Transverse colon (tissue), 4 donors: ENCODE measurements at regions of chr5 and their contacts with region 1.

Region 1: GRCh38 chr5:140157032-140157803 is 17.8 kb upstream of the CYSTM1 start:
- DNase-seq: peak; percentile 92
- H3K4me3 ChIP-seq: peak overlapping the region in 3 of 4 donors; percentile 19 to 33 (median 28)
- H3K27ac ChIP-seq: peak overlapping the region in 3 of 4 donors; percentile 11 to 17 (median 15)
- H3K4me1 ChIP-seq: peaks cover 3 to 15% (median 9%) of the 10 kb centered on the region in 4 donors
- H3K27me3 ChIP-seq: no peaks in the 10 kb centered on the region
- CTCF ChIP-seq: peak; percentile 87 to 93 (median 90)
- EP300 ChIP-seq: no peak
- POLR2A ChIP-seq: no peak

Region 2: GRCh38 chr5:140073296-140073695 is 83.9 kb before region 1 on chr5:
- in situ Hi-C with region 1: loop called (anchors 5 to 10 kb)
- intact Hi-C with region 1: loop called (anchors 1 kb)
- DNase-seq: no peak
- H3K4me3 ChIP-seq: no peak overlapping the region
- H3K27ac ChIP-seq: no peak overlapping the region
- H3K4me1 ChIP-seq: peaks cover 0 to 4% (median 0%) of the 10 kb centered on the region in 4 donors
- H3K27me3 ChIP-seq: peaks cover 23% of the 10 kb centered on the region
- CTCF ChIP-seq: peak; percentile 67 to 80 (median 72)
- EP300 ChIP-seq: no peak
- POLR2A ChIP-seq: no peak

Region 3: DNA sequence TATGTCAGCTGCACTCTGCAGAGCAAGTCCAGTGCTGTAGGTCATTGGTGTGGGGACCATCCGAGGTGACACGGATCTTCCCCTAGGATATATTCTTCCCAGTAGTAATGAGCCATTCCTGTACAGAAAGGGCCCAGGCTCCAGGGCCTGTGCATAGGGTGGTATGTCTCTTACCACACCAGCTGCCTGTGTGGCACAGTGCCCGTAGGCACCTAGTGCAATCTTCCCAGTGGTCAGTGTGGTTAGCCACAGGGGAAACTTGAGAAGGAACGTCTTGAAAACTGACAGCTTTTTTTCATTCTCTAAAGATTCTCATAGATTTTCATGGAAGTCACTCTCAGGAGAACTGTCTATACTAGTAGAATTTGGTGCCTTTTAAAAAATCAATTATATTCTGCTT is 57.6 kb after region 1 on chr5:
- in situ Hi-C with region 1: no loop called
- intact Hi-C with region 1: no loop called
- DNase-seq: peak; percentile 38
- H3K4me3 ChIP-seq: no peak overlapping the region
- H3K27ac ChIP-seq: no peak overlapping the region
- H3K4me1 ChIP-seq: peaks cover 8 to 44% (median 35%) of the 10 kb centered on the region in 4 donors
- H3K27me3 ChIP-seq: no peaks in the 10 kb centered on the region
- CTCF ChIP-seq: no peak
- EP300 ChIP-seq: no peak
- POLR2A ChIP-seq: no peak